IMR-90 (cell line): ENCODE measurements at regions of chr1 and their contacts with region 1.

Region 1: DNA sequence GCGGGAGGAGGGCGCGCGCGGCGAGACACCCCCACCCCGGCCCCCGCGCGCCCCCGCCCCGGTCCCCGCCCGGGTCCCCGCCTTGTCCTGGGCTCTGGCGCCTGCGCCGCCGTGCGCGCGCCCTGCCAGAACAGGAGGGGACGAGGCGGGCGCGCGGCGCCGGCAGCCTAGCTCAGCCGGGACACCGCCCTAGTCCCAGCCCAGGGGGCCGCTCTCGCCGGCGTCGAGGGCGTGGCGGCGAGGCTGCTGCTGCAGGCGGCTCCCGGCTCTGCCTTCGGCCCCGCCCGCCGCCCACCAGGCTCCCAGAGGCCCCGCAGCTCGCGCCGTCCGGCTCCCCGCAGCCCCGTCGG is at the start of gene RCAN3:
- DNase-seq: peak; percentile 75
- ATAC-seq: peak; percentile 98
- H3K4me3 ChIP-seq: peak within 1 kb of the TSS; percentile 88
- H3K27ac ChIP-seq: peak within 1 kb of the TSS; percentile 64; the same call in 1 of the 2 replicates
- H3K4me1 ChIP-seq: no peaks in the 10 kb centered on the region
- H3K27me3 ChIP-seq: peaks cover 4% of the 10 kb centered on the region
- CTCF ChIP-seq: no peak
- POLR2A ChIP-seq: no peak
- RAD21 ChIP-seq: 0 out of 2 replicates have a peak, but pooled peaks have one; percentile 4
- total RNA-seq, gene RCAN3: 5.9 and 8.6 TPM in 2 replicates

Region 2: DNA sequence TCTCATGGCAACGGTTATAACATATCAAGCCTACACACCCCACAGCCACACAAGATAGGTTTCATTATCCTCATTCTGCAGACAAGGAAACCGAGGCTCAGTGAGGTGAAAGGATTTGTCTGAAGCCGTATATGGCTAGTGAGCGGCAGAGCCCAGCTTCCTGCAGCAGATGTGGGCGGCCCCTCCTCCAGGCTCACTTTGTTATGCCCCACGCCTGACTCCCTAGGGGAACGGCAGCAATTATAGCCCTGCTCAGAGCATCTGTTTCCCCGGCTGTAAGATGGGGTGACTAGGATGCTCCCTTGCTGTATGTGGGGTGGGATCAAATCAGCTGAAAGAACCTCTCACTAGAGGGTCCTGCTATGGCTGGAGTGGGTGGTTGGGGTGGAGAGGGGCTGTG is 161.4 kb before region 1 on chr1:
- CTCF ChIA-PET with region 1: no interaction called
- POLR2A ChIA-PET with region 1: no interaction called
- dilution Hi-C with region 1: no loop called
- in situ Hi-C with region 1: no loop called
- intact Hi-C with region 1: no loop called
- DNase-seq: no peak
- ATAC-seq: peak; percentile 29; the same call in 1 of the 2 replicates
- H3K4me3 ChIP-seq: no peak overlapping the region
- H3K27ac ChIP-seq: no peak overlapping the region
- H3K4me1 ChIP-seq: no peaks in the 10 kb centered on the region
- H3K27me3 ChIP-seq: peaks cover 25% of the 10 kb centered on the region
- CTCF ChIP-seq: no peak
- POLR2A ChIP-seq: no peak
- RAD21 ChIP-seq: no peak

Region 3: GRCh38 chr1:24415334-24415909 is 87.3 kb before region 1 on chr1 and contains the start of gene NIPAL3:
- CTCF ChIA-PET with region 1: no interaction called
- POLR2A ChIA-PET with region 1: no interaction called
- dilution Hi-C with region 1: no loop called
- in situ Hi-C with region 1: no loop called
- intact Hi-C with region 1: loop called (anchors 2 kb)
- DNase-seq: peak; percentile 99
- ATAC-seq: peak; percentile 67
- H3K4me3 ChIP-seq: peak within 1 kb of the TSS; percentile 69
- H3K27ac ChIP-seq: peak within 1 kb of the TSS; percentile 72
- H3K4me1 ChIP-seq: peaks cover 18% of the 10 kb centered on the region
- H3K27me3 ChIP-seq: no peaks in the 10 kb centered on the region
- CTCF ChIP-seq: peak; percentile 71
- POLR2A ChIP-seq: no peak; the same call in 1 of the 2 replicates
- RAD21 ChIP-seq: peak; percentile 43
- total RNA-seq, gene NIPAL3: 95.3 and 123 TPM in 2 replicates

Region 4: GRCh38 chr1:24619376-24619775 is 116.7 kb after region 1 on chr1:
- CTCF ChIA-PET with region 1: no interaction called
- POLR2A ChIA-PET with region 1: no interaction called
- dilution Hi-C with region 1: no loop called
- in situ Hi-C with region 1: no loop called
- intact Hi-C with region 1: loop called (anchors 10 kb)
- DNase-seq: no peak
- ATAC-seq: no peak
- H3K4me3 ChIP-seq: no peak overlapping the region
- H3K27ac ChIP-seq: no peak overlapping the region
- H3K4me1 ChIP-seq: no peaks in the 10 kb centered on the region
- H3K27me3 ChIP-seq: peaks cover 19% of the 10 kb centered on the region
- CTCF ChIP-seq: no peak
- POLR2A ChIP-seq: no peak
- RAD21 ChIP-seq: no peak